ENCODE measurements at regions of chr2 and their contacts with region 1.

Region 1: DNA sequence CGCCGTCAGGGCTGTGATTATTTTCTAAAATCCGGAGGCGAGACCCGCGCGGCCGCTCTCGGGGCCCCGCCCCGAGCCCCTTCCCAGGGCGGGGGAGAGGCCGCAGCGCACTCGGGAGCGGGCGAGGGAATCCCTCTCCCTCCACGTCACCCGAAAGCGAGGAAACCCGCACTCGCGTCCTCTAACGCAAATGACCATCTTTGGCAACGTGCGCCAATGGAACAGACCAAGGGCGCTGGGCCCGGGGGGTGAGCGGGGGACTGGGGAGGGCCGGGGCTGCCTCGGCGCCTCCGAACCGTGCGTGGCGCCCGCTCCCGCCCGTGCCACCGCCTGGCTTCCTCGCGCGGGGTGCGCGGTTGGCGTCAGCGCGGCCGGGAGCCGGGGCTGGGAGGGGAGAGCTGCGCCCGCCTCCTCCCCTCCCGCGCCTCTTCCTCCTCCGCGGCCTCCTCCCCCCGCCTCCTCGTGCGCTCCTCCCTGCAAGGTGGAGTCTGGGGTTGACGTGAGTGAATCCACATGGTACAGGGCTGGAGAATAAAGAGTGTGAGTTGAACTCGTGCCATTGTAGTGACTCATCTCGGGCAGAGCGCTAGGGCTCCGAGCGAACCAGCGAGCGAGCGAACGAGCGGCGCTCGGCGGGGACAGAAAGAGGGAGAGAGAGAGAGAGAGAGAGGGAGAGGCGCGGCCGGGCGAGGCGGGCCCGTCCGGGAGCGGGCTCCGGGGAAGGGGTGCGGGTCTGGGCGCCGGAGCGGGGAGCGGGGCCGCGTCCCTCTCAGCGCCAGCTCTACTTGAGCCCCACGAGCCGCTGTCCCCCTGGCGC is at the start of gene FOSL2:
- DNase-seq: peak; percentile 94 to 98
- ATAC-seq: peak; percentile 70 to 85 (median 74)
- H3K4me3 ChIP-seq: peak within 1 kb of the TSS; percentile 56 to 99 (median 98)
- H3K27ac ChIP-seq: peak within 1 kb of the TSS; percentile 99 to 100 (median 100)
- H3K4me1 ChIP-seq: peaks cover 0 to 45% (median 28%) of the 10 kb centered on the region in 9 donors
- H3K27me3 ChIP-seq: no peaks in the 10 kb centered on the region
- CTCF ChIP-seq: peak in 1 of 9 donors; percentile 4
- total RNA-seq, gene FOSL2: 29.7 to 182 (median 60.3) TPM

Region 2: DNA sequence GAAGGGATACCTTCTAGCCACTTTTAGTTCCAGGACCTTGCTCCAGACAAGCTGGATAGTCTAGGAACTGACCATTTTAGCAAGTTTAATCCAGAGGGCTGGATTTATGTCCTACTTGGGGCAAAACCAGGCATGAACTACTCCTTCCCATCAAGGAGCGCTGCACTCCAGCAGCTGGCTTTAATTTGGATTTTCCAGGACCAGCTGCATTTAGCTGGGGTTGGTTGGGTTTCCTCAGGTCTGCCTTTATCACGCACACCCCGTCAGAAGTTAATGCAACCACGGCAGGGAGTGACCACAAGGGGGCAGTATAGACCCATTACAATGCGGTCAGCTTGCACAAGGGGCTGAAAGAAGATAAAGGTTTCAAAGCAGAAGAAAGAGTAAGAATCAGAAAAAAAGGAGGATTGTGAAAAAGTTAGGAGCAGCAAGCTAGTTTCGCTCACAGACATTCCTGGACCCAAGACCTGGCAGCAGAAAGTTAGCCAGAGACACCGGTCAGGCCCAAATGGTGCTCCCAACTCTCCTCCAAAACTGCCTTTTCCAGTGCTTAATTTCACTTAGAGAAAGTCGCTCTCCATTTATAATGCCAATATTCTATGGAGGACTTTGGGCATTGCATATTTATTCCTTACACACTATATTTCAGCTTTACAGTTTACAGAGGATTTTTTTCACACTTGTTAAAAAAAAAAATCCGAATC is 688.7 kb before region 1 on chr2:
- intact Hi-C with region 1: loop called in 6 of 10 experiments (anchors 2 to 10 kb)
- DNase-seq: peak; percentile 70 to 89
- ATAC-seq: peak; percentile 32 to 76 (median 62)
- H3K4me3 ChIP-seq: no peak overlapping the region
- H3K27ac ChIP-seq: peak overlapping the region in 2 of 10 donors; percentile 36 to 79
- H3K4me1 ChIP-seq: peaks cover 7 to 45% (median 28%) of the 10 kb centered on the region in 9 donors
- H3K27me3 ChIP-seq: no peaks in the 10 kb centered on the region
- CTCF ChIP-seq: peak; percentile 88 to 95 (median 93)

Region 3: DNA sequence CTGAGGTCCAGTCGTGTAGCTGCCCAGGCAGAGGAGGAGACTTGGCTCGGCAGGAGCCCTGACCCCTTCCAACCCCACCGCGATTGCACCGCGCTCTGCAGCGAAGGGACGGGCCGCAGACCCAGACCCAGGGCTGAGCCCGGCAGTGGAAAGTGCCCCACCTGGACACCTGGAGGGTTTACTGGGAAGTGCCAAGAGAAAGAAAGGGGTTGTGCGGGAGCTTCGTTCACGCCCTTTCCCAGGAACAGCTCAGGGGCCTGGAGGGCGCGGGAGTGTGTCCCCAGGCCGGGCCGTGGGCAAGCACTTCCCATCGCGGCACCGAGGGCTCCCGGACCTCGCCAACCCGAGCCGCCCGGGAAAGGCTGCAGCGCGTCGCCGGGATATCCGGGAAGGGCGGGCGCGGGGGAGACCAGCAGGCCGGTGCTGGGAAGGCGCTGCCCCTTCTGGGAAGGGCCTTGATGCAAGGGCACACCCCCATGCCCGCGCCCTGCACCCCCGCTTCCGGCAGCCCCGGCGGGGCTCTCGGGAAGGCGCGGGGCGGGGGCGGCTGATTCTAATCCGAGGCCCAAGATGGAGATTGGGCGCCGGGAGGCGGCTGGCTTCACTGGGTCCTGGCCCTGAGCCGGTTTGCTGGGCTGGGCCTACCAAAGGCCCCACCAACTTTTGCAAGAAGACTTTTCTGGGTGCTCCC is 657.1 kb before region 1 on chr2:
- intact Hi-C with region 1: loop called in 2 of 10 experiments (anchors 5 to 10 kb)
- DNase-seq: peak; percentile 84 to 88
- ATAC-seq: peak; percentile 93 to 96 (median 96)
- H3K4me3 ChIP-seq: peak overlapping the region; percentile 12 to 60 (median 56)
- H3K27ac ChIP-seq: peak overlapping the region; percentile 76 to 94 (median 88)
- H3K4me1 ChIP-seq: peaks cover 12 to 55% (median 50%) of the 10 kb centered on the region in 9 donors
- H3K27me3 ChIP-seq: no peaks in the 10 kb centered on the region
- CTCF ChIP-seq: no peak

Region 4: DNA sequence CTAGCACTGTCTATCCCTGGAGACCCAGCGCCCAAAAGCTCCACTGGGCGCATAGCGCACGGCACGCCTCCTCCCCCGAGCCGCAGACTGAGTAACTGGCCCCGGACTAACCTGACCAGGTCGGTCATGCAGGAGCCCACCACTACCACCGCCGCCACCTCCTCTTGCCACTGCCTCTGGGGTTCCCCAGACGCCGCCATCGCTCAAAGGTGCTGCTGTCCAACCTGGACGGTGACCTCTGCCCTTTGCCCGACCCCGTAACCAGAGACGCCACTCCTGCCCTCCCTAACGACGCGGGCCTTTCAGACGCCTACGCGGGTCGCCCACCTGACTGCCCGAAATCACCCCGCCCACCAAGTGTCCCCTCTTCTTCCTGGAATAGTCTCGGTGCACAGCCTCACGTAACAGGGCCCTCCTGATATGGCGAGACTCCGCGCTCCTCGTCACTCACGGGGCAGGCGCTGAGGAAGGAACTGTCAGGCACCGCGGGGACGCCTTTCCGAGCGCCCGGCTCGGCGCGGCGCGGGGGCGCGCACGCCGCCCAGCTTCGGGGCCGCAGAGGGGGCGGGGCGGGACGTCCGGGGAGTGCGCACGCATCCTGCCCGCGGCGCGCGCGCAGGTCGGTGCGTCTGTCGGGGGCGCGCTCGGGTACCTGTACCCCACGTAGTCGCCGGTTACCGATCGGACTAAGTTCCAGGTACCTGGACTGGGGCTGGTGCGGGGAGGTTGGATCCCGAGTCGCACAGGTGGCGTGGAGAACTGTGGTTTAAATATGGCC is 502.2 kb before region 1 on chr2 and contains the starts of genes BABAM2 and RBKS:
- intact Hi-C with region 1: loop called in 7 of 10 experiments (anchors 1 to 5 kb)
- DNase-seq: peak; percentile 89 to 90
- ATAC-seq: peak; percentile 93 to 98 (median 96)
- H3K4me3 ChIP-seq: peak within 1 kb of the TSS; percentile 55 to 84 (median 80)
- H3K27ac ChIP-seq: peak within 1 kb of the TSS; percentile 80 to 99 (median 98)
- H3K4me1 ChIP-seq: peaks cover 0 to 61% (median 34%) of the 10 kb centered on the region in 9 donors
- H3K27me3 ChIP-seq: no peaks in the 10 kb centered on the region
- CTCF ChIP-seq: no peak
- total RNA-seq, gene BABAM2: 54.9 to 83.4 (median 69.3) TPM
- total RNA-seq, gene RBKS: 3.4 to 9.1 (median 5.5) TPM

Region 5: GRCh38 chr2:28102455-28102874 is 290.0 kb before region 1 on chr2:
- intact Hi-C with region 1: loop called in 4 of 10 experiments (anchors 2 to 10 kb)
- DNase-seq: peak in 1 of 2 donors; percentile 29
- ATAC-seq: peak; percentile 82 to 91 (median 87)
- H3K4me3 ChIP-seq: peak overlapping the region in 5 of 10 donors; percentile 15 to 34 (median 29)
- H3K27ac ChIP-seq: peak overlapping the region; percentile 36 to 87 (median 74)
- H3K4me1 ChIP-seq: peaks cover 5 to 42% (median 30%) of the 10 kb centered on the region in 9 donors
- H3K27me3 ChIP-seq: no peaks in the 10 kb centered on the region
- CTCF ChIP-seq: no peak

Region 6: DNA sequence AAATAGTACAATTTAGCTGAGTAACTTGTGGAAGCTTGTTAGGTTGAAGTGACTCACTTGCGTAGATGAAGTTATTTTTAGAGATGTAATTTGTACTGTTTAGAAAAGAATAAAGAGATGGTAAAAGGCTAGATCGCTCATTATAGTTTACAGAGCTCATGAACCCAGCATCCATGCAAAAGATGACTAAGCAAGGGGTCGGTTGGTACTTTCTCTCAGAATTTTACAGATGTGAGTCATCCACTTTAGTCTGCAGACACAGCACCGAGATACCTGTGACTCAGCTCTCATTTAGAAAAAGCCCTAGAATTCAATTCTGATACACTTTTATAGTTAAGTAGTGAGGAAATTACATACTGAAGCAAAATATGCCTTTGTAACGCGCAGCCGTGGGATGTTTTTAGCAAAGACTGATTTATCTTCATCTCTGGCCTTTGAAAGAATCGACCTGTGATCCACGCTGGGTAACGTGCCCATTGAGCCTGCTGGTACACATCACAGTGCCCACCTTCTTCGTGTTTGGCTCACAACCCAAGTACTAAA is 116.4 kb before region 1 on chr2:
- intact Hi-C with region 1: loop called in 5 of 10 experiments (anchors 2 to 10 kb)
- DNase-seq: no peak
- ATAC-seq: peak in 5 of 8 donors; percentile 11 to 44 (median 41)
- H3K4me3 ChIP-seq: no peak overlapping the region
- H3K27ac ChIP-seq: peak overlapping the region in 7 of 10 donors; percentile 6 to 77 (median 54)
- H3K4me1 ChIP-seq: peaks cover 0 to 48% (median 29%) of the 10 kb centered on the region in 9 donors
- H3K27me3 ChIP-seq: no peaks in the 10 kb centered on the region
- CTCF ChIP-seq: no peak

Region 7: GRCh38 chr2:28356095-28356911 is 36.2 kb before region 1 on chr2:
- intact Hi-C with region 1: loop called in 1 of 10 experiments (anchors 2 kb)
- DNase-seq: peak; percentile 92 to 95
- ATAC-seq: peak; percentile 89 to 95 (median 92)
- H3K4me3 ChIP-seq: no peak overlapping the region
- H3K27ac ChIP-seq: peak overlapping the region; percentile 75 to 97 (median 90)
- H3K4me1 ChIP-seq: peaks cover 17 to 50% (median 20%) of the 10 kb centered on the region in 9 donors
- H3K27me3 ChIP-seq: no peaks in the 10 kb centered on the region
- CTCF ChIP-seq: no peak